Naive thymus-derived CD4-positive, alpha-beta T cell (primary cell): ENCODE measurements at regions of chr3 and their contacts with region 1.

Region 1: DNA sequence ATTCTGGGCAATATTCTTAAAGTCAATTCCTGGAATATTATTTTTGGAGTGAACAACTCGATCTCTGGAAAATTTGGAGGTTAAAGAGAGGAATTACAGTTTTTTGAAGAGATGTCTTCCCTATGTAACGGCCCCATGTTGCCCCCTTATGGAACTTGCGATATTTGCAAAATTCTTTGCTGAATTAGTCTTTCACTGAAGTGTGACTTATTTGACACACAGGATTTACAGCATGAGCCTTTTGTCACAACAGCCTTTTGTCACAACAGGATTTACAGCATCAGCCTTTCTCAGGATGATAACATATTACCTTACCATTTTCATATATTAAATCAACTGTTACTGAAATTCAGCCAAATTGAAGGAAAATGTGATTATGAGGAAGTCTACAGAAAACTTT is 37.8 kb upstream of the SPTSSB start:
- DNase-seq: peak in 7 of 9 donors; percentile 17 to 56 (median 55)
- ATAC-seq: peak; percentile 68
- H3K4me3 ChIP-seq: no peak overlapping the region
- H3K4me3 Mint-ChIP-seq: no peak overlapping the region
- H3K27ac ChIP-seq: no peak overlapping the region
- H3K27ac Mint-ChIP-seq: no peak overlapping the region
- H3K4me1 ChIP-seq: peaks cover 21 to 22% of the 10 kb centered on the region in 2 donors
- H3K4me1 Mint-ChIP-seq: peaks cover 8 to 34% (median 30%) of the 10 kb centered on the region in 7 donors
- H3K27me3 ChIP-seq: no peaks in the 10 kb centered on the region
- H3K27me3 Mint-ChIP-seq: peaks cover 0 to 66% (median 6%) of the 10 kb centered on the region in 5 donors

Region 2: DNA sequence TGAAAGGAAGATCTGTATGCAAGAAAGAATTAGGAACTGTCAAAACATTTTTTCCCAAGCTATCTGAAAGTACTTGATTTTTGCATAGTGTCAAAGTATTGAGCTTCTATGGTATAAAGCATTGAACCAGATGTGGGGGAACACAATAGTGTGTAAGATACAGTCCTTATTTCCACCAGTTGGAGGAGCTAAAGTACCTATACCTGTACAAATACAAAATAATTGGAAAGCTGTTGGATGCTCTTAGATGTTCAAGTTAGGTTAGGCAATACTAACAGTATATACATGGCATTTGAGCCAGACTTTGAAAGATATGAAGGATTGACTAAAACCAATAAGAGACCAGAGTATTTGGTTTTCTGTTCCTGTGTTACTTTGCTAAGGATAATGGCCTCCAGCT is 452.3 kb before region 1 on chr3:
- CTCF ChIA-PET with region 1: no interaction called
- POLR2A ChIA-PET with region 1: no interaction called
- intact Hi-C with region 1: loop called in 1 of 2 experiments (anchors 5 kb)
- DNase-seq: no peak
- ATAC-seq: peak; percentile 63
- H3K4me3 ChIP-seq: no peak overlapping the region
- H3K4me3 Mint-ChIP-seq: no peak overlapping the region
- H3K27ac ChIP-seq: no peak overlapping the region
- H3K27ac Mint-ChIP-seq: no peak overlapping the region
- H3K4me1 ChIP-seq: no peaks in the 10 kb centered on the region
- H3K4me1 Mint-ChIP-seq: no peaks in the 10 kb centered on the region
- H3K27me3 ChIP-seq: peaks cover 0 to 2% of the 10 kb centered on the region in 2 donors
- H3K27me3 Mint-ChIP-seq: peaks cover 0 to 15% (median 8%) of the 10 kb centered on the region in 5 donors

Region 3: GRCh38 chr3:161149529-161149928 is 259.5 kb before region 1 on chr3:
- CTCF ChIA-PET with region 1: no interaction called
- POLR2A ChIA-PET with region 1: no interaction called
- intact Hi-C with region 1: no loop called
- DNase-seq: no peak
- ATAC-seq: no peak
- H3K4me3 ChIP-seq: no peak overlapping the region
- H3K4me3 Mint-ChIP-seq: no peak overlapping the region
- H3K27ac ChIP-seq: no peak overlapping the region
- H3K27ac Mint-ChIP-seq: no peak overlapping the region
- H3K4me1 ChIP-seq: no peaks in the 10 kb centered on the region
- H3K4me1 Mint-ChIP-seq: no peaks in the 10 kb centered on the region
- H3K27me3 ChIP-seq: no peaks in the 10 kb centered on the region
- H3K27me3 Mint-ChIP-seq: peaks cover 0 to 14% (median 6%) of the 10 kb centered on the region in 5 donors

Region 4: DNA sequence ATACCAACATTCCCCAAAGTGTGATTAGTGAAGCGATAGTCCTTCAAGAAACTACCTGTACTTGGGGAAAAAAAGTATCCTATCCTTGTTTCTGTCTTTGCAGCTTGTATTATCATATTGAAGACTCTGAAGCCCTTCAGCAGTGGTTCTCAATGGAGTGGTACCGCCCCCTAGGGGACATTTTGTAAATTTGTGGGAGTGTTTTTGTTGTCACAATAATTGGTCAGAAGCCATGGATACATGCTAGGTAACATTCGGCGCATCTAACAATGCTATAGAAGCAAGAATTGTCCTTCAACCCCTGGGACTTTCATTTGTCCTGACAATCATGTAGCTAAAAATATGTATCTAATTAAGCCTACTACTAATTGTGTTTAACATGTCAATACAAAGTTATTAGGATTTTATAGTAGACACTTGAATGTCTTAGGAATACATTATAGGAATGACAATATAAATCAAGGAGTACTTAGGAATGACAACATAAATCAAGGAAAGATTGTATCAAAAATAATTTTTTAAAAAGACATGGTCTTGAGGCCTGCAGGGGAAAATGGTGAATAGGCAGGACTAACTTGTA is 134.3 kb before region 1 on chr3:
- CTCF ChIA-PET with region 1: interaction called, 24 read pairs
- POLR2A ChIA-PET with region 1: interaction called, 3 read pairs
- intact Hi-C with region 1: loop called (anchors 1 kb)
- DNase-seq: peak in 8 of 9 donors; percentile 13 to 52 (median 34)
- ATAC-seq: peak; percentile 57
- H3K4me3 ChIP-seq: no peak overlapping the region
- H3K4me3 Mint-ChIP-seq: no peak overlapping the region
- H3K27ac ChIP-seq: no peak overlapping the region
- H3K27ac Mint-ChIP-seq: peak overlapping the region in 1 of 9 donors; percentile 59
- H3K4me1 ChIP-seq: no peaks in the 10 kb centered on the region
- H3K4me1 Mint-ChIP-seq: peaks cover 0 to 9% (median 3%) of the 10 kb centered on the region in 7 donors
- H3K27me3 ChIP-seq: no peaks in the 10 kb centered on the region
- H3K27me3 Mint-ChIP-seq: peaks cover 0 to 4% (median 0%) of the 10 kb centered on the region in 5 donors

Region 5: DNA sequence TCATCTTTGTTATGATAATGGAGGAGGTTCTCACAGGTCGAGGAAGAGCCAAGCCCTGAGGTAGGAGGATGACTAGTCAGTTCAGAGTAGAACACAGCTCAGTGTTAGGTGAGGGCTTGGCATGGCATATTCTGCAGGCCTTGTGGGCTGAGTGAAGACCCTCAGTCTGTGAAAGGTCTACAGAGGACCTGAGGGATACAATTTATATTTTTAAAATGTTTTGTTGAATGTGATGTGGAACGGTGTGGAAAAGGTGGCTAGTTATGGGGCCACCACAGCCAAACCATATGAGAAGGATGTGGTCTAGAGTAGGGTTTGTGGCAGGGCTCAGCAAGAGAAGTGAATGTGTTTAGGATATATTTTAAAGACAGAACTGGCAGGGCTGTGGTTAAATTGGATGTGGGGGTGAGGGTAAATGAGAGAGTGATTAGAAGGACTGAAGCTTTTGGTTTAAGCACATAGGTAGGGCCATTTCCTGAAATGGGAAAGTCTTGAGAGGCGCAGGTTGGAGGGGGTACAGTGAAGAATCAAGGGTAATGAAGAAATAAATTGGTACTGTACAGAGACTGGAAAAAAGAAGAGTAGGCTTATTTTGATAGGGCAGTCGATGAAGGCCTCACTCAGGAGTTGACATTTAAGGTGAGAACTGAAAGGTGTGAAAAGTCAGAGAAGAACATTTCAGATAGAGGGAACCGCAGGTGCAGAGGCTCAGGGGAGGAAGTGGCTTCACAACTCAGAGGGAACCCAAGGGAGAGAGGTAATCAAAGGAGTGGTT is 98.2 kb before region 1 on chr3:
- CTCF ChIA-PET with region 1: interaction called, 11 read pairs
- POLR2A ChIA-PET with region 1: no interaction called
- intact Hi-C with region 1: loop called in 1 of 2 experiments (anchors 2 kb)
- DNase-seq: peak in 8 of 9 donors; percentile 39 to 77 (median 66)
- ATAC-seq: peak; percentile 87
- H3K4me3 ChIP-seq: no peak overlapping the region
- H3K4me3 Mint-ChIP-seq: peak overlapping the region; percentile 40 to 75 (median 64)
- H3K27ac ChIP-seq: peak overlapping the region; percentile 25
- H3K27ac Mint-ChIP-seq: peak overlapping the region; percentile 33 to 85 (median 59)
- H3K4me1 ChIP-seq: peaks cover 43 to 50% of the 10 kb centered on the region in 2 donors
- H3K4me1 Mint-ChIP-seq: peaks cover 25 to 85% (median 67%) of the 10 kb centered on the region in 7 donors
- H3K27me3 ChIP-seq: no peaks in the 10 kb centered on the region
- H3K27me3 Mint-ChIP-seq: peaks cover 0 to 68% (median 0%) of the 10 kb centered on the region in 5 donors

Region 6: GRCh38 chr3:161371430-161372326 is 37.4 kb before region 1 on chr3 and contains the start of gene SPTSSB:
- CTCF ChIA-PET with region 1: interaction called, 7 read pairs
- POLR2A ChIA-PET with region 1: interaction called, 3 read pairs
- intact Hi-C with region 1: loop called in 1 of 2 experiments (anchors 1 kb)
- DNase-seq: peak; percentile 21 to 57 (median 43)
- ATAC-seq: peak; percentile 75
- H3K4me3 ChIP-seq: peak within 1 kb of the TSS; percentile 68
- H3K4me3 Mint-ChIP-seq: peak within 1 kb of the TSS; percentile 79 to 93 (median 88)
- H3K27ac ChIP-seq: no peak within 1 kb of the TSS
- H3K27ac Mint-ChIP-seq: peak within 1 kb of the TSS in 3 of 9 donors; percentile 46 to 64 (median 57)
- H3K4me1 ChIP-seq: peaks cover 7% of the 10 kb centered on the region in 2 donors
- H3K4me1 Mint-ChIP-seq: peaks cover 7 to 21% (median 18%) of the 10 kb centered on the region in 7 donors
- H3K27me3 ChIP-seq: peaks cover 0 to 15% of the 10 kb centered on the region in 2 donors
- H3K27me3 Mint-ChIP-seq: peaks cover 6 to 84% (median 22%) of the 10 kb centered on the region in 5 donors
- total RNA-seq, gene SPTSSB: 0.34 to 1.6 TPM in 2 of 5 experiments, not detected in the others

Region 7: DNA sequence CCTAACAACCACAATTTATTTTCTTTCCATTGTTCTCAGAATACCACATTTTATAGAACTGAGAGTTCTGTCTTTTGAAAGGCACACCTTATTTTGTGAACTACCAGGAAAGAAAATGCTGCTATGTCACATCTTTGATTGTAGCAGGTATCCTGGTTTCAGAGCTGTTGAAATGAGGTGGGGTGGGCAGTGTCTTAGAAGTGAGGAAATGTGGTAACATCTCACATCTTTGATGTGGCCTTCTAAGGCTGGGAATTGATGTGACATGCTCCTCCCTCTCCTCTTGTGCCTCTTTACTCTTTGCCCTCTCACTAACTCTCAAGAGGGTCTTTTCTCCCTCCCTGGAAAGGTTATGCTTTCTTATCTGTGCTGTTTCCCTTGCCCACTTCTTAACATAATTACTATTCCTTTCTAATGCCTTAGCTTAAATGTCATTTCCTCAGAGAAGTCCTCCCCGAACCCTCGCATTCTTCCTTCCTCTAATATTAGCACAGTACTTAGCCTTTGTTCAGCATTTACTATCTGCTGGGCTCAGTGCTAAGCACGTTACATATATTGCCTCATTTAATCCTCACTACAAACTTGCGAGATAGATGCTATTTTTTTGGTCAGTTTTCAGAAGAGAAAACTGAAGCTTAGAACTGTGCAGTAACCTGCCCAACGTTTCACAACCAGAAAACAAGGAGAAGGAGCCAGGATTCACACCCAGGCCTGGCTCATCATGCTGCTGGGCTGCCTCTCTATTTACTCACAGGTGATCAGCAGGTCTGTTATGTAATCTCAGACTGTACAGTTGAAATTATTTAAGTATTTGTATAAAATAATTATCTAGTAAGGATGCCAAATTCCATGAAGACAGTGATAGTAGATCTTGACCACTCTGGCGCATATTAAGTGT is 13.7 kb before region 1 on chr3:
- CTCF ChIA-PET with region 1: interaction called, 5 read pairs
- POLR2A ChIA-PET with region 1: interaction called, 4 read pairs
- intact Hi-C with region 1: loop called in 1 of 2 experiments (anchors 1 kb)
- DNase-seq: peak in 7 of 9 donors; percentile 51 to 84 (median 76)
- ATAC-seq: peak; percentile 93
- H3K4me3 ChIP-seq: peak overlapping the region; percentile 10
- H3K4me3 Mint-ChIP-seq: peak overlapping the region; percentile 52 to 85 (median 66)
- H3K27ac ChIP-seq: no peak overlapping the region
- H3K27ac Mint-ChIP-seq: peak overlapping the region in 8 of 9 donors; percentile 1 to 71 (median 37)
- H3K4me1 ChIP-seq: peaks cover 23 to 38% of the 10 kb centered on the region in 2 donors
- H3K4me1 Mint-ChIP-seq: peaks cover 25 to 81% (median 69%) of the 10 kb centered on the region in 7 donors
- H3K27me3 ChIP-seq: peaks cover 0 to 4% of the 10 kb centered on the region in 2 donors
- H3K27me3 Mint-ChIP-seq: peaks cover 0 to 61% (median 6%) of the 10 kb centered on the region in 5 donors